B cell (primary cell): ENCODE measurements at regions of chr3 and their contacts with region 1.

Region 1: GRCh38 chr3:158313338-158313927 is 203.5 kb downstream of the RSRC1 start:
- DNase-seq: peak; percentile 15
- ATAC-seq: no peak
- H3K4me3 ChIP-seq: no peak overlapping the region
- H3K4me3 Mint-ChIP-seq: no peak overlapping the region
- H3K27ac ChIP-seq: no peak overlapping the region
- H3K27ac Mint-ChIP-seq: no peak overlapping the region
- H3K4me1 ChIP-seq: no peaks in the 10 kb centered on the region
- H3K4me1 Mint-ChIP-seq: no peaks in the 10 kb centered on the region
- H3K27me3 ChIP-seq: no peaks in the 10 kb centered on the region
- H3K27me3 Mint-ChIP-seq: no peaks in the 10 kb centered on the region
- CTCF ChIP-seq: peak; percentile 49

Region 2: DNA sequence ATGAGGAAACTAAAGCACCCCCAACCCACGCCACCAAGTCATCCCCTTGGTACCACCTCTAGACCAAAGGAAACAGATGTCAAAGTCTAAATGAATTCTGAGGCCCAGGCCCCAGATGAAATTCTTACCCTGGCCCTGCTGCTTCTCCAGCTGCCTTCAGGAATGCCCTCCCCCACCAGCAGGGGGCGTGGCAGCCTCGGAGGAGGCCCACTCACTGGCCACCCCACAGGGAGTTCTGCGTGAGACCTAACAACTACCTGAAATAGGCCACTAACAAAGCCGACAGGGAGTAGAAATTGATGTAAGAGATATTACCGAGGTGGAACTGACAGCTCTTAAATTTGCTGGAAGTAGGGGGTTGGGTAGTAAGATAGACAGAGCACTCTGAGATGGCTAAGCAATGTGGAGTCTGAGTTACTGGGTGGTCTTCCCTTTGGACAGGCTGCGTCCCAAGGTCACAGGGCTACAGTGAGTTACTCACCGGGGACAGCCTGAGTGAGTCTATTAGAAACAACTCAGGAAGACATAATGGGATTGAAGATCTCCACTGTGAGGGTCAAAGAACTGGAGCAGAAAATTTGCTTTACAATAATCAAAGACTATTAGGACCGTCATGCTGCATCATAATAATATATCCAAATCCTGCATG is 448.0 kb before region 1 on chr3:
- CTCF ChIA-PET with region 1: no interaction called
- POLR2A ChIA-PET with region 1: no interaction called
- intact Hi-C with region 1: loop called (anchors 2 kb)
- DNase-seq: peak; percentile 17
- ATAC-seq: no peak
- H3K4me3 ChIP-seq: no peak overlapping the region
- H3K4me3 Mint-ChIP-seq: no peak overlapping the region
- H3K27ac ChIP-seq: no peak overlapping the region
- H3K27ac Mint-ChIP-seq: no peak overlapping the region
- H3K4me1 ChIP-seq: no peaks in the 10 kb centered on the region
- H3K4me1 Mint-ChIP-seq: no peaks in the 10 kb centered on the region
- H3K27me3 ChIP-seq: no peaks in the 10 kb centered on the region
- H3K27me3 Mint-ChIP-seq: no peaks in the 10 kb centered on the region
- CTCF ChIP-seq: peak; percentile 50